ENCODE measurements at regions of chr16 and their contacts with region 1.

Region 1: GRCh38 chr16:84726079-84726668 is 26.4 kb downstream of the USP10 start:
- DNase-seq: peak; percentile 78 to 97 (median 92)

Region 2: GRCh38 chr16:84277237-84277823 is 448.8 kb before region 1 on chr16:
- intact Hi-C with region 1: no loop called
- DNase-seq: peak; percentile 46 to 96 (median 80)

Region 3: GRCh38 chr16:84511180-84511824 is 214.9 kb before region 1 on chr16:
- intact Hi-C with region 1: loop called (anchors 2 kb)
- DNase-seq: peak; percentile 75 to 97 (median 82)

Region 4: DNA sequence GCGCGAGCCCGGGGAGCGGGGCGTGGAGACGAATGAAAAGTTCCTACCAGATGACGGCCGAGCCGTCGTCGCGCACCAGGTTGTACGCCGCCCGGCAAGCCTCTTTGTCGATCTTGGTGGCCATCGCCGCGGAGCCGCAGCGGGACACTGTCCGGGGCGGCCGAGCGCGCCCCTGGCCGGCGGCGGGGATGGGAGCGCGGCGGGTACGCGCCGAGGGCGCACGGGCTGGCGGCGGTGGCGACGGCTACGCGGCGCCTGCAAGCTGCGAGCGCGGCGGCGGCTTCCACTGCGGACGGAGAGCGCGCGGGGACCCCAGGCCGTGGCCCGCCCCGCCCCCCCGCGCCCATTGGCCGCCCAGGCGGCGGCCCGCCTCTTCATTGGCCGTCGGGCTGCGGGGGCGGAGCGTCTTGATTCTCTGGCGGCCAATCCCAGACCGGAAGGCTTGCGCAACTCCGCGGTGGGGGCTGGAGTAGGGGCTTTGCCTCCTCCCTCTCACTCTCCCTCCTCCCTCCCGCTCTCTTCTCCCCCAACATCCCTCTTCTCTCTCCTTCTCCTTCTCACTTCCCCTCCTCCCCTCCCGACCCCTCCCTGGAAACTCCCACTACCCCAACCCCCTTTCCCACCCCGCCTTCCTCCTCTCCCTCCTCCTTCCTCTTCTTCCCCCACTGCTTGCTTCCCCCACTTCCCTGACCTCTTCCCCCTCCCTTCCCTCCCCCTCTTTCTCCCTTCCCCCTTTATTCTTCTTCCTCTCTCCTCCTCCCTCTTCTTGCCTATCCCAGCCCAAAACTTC is 108.2 kb before region 1 on chr16 and contains the start of gene COTL1:
- intact Hi-C with region 1: loop called (anchors 5 kb)
- DNase-seq: peak; percentile 88 to 99 (median 95)

Region 5: GRCh38 chr16:84672276-84673202 is 53.6 kb before region 1 on chr16:
- intact Hi-C with region 1: loop called (anchors 2 kb)
- DNase-seq: peak; percentile 23 to 93 (median 74)

Measured in posterior cingulate gyrus (tissue), 11 donors.